ENCODE measurements at regions of chr1 and their contacts with region 1.

Region 1: DNA sequence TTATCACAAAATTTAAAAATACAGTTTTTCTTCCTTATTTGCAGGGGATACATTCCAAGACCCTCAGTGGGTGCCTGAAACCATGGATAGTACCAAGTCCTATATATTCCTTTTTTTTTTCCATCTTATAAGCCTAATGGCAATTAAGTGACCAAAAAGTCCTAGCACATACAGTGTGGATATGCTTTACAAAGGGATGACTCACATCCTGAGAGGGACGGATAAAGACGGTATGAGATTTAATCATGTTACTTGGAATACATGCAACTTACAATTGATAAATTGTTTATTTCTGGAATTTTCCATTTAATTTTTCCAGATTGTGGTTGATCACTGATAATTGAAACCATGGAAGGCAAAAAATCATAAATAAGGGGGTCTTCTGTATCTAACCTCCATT is 181.2 kb upstream of the BRINP3 start:
- DNase-seq: no peak

Region 2: GRCh38 chr1:190699165-190699564 is 40.3 kb after region 1 on chr1:
- intact Hi-C with region 1: loop called in 1 of 2 experiments (anchors 2 kb)
- DNase-seq: no peak

Region 3: DNA sequence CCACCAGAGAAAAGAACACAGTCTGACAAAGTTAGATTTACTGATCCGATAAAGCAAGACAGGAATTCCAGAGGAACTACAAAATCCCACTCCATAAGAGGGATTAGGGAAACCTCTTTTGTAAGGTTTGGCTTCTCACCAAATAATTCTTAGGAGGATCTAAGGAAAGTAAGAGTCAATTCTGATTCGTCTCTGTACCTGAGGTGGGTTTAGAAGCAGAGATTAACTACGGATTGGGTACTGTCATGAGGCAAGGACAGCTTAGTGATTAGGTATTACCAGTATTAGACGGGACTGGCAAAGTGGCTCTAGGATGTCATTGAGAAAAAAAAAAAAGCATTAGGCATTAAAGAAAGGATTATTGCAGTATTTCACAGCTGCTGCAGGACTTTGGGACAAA is 190.4 kb after region 1 on chr1:
- intact Hi-C with region 1: no loop called
- DNase-seq: no peak